ENCODE measurements at regions of chr9 and their contacts with region 1.

Region 1: GRCh38 chr9:6412487-6413364 is at the start of gene UHRF2:
- DNase-seq: peak; percentile 100
- H3K4me3 Mint-ChIP-seq: peak within 1 kb of the TSS; percentile 83
- H3K27ac Mint-ChIP-seq: peak within 1 kb of the TSS; percentile 98
- H3K4me1 Mint-ChIP-seq: peaks cover 37% of the 10 kb centered on the region
- H3K27me3 Mint-ChIP-seq: peaks cover 19% of the 10 kb centered on the region
- total RNA-seq, gene UHRF2: 69.8 to 75.8 TPM

Region 2: DNA sequence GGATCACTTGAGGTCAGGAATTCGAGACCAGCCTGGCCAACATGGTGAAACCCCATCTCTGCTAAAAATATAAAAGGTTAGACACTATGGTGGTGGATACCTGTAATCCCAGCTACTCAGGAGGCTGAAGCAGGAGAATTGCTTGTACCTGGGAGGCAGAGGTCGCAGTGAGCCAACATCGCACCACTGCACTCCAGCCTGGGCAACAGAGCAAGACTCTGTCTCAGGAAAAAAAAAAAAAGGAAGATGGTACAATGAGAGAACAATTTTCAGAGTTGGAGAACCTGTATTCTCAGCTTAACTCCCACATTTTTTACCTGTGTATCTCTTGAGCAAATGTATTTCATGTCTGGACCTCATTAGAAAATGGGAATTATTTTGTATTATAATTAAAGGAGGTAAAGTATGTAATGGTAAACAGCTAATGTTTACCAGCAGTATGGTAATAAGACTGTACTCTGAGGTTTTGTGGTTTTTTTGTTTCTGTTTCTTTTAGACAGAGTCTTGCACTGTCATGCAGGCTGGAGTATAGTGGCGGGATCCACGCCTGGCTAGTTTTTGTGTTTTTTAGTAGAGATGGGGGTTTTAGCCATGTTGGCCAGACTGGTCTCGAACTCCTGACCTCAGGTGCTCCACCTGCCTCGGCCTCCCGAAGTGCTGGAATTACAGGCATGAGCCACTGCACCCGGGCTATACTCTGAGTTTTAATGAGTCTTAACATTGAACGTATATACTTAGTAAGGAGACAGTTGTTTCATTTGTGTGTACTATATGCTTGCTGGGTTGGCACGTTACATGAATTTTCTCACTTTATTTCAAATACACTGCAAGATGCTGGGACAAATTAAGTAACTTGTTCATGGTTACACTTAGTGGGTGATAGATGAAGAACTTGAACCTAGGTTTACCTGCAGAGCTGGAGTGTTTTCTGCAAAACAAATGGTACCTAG is 16.5 kb after region 1 on chr9:
- CTCF ChIA-PET with region 1: interaction called, 14 read pairs
- POLR2A ChIA-PET with region 1: no interaction called
- DNase-seq: peak; percentile 41
- H3K4me3 Mint-ChIP-seq: peak overlapping the region; percentile 28
- H3K27ac Mint-ChIP-seq: peak overlapping the region; percentile 81
- H3K4me1 Mint-ChIP-seq: peaks cover 71% of the 10 kb centered on the region
- H3K27me3 Mint-ChIP-seq: no peaks in the 10 kb centered on the region